ENCODE measurements at regions of chr1 and their contacts with region 1.

Region 1: DNA sequence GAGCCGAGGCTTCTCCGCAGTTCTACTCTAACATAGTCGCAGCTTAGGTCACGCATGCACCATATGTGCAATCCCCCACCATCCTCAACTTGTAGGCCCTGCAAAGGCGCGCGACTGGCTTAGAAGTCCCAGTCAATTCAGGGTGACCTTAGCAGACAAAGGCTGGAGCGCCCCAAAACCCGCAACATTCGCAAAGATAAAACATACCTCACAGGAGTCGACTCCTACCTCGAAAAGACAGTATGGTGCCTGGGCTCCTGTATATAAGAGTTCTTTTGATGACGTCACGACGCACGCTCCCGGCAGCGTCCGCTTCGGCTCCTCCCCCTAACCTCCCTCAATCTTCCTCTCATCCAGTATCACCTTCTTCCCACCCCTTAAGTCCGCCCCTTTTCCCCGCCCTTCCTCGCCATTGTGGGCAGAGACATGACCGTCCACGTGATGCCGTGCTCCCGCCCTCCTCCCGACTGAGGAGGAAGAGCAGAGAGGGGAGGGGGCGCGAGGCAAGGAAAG is at the start of gene GAS5:
- DNase-seq: peak; percentile 99
- H3K4me3 ChIP-seq: peak within 1 kb of the TSS; percentile 36 to 99 (median 90)
- H3K27ac ChIP-seq: peak within 1 kb of the TSS; percentile 64
- H3K4me1 ChIP-seq: peaks cover 48% of the 10 kb centered on the region
- H3K27me3 ChIP-seq: no peaks in the 10 kb centered on the region
- CTCF ChIP-seq: no peak
- POLR2A ChIP-seq: peak; percentile 100
- total RNA-seq, gene GAS5: 302 and 343 TPM in 2 replicates

Region 2: GRCh38 chr1:173476664-173477285 is 391.0 kb before region 1 on chr1:
- CTCF ChIA-PET with region 1: no interaction called
- POLR2A ChIA-PET with region 1: no interaction called
- dilution Hi-C with region 1: no loop called
- intact Hi-C with region 1: loop called (anchors 1 kb)
- DNase-seq: peak; percentile 81
- H3K4me3 ChIP-seq: peak overlapping the region; percentile 63 to 78 (median 70)
- H3K27ac ChIP-seq: peak overlapping the region; percentile 79
- H3K4me1 ChIP-seq: peaks cover 53% of the 10 kb centered on the region
- H3K27me3 ChIP-seq: no peaks in the 10 kb centered on the region
- CTCF ChIP-seq: peak in 1 of 2 donors; percentile 3
- POLR2A ChIP-seq: peak; percentile 78

Region 3: DNA sequence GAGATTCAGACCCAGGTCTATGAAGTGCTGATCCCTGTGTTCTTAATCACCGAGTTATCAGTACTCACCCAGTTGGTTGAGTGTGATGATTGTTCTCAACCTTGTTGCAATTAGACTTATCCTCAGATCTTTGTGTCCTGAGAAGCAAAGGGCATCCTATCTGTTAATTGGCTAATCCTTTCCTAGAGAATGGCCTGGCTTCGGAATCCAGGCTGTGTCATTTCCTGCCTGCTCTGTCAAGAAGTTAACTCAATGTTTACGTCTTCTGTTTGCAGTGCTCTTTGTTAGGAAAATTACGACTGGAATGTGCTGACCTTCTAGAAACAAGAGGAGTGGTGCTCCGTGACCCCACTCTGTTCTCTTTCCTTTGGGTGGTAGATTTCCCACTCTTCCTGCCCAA is 14.7 kb before region 1 on chr1:
- CTCF ChIA-PET with region 1: interaction called, 5 read pairs
- POLR2A ChIA-PET with region 1: interaction called, 6 read pairs
- dilution Hi-C with region 1: no loop called
- intact Hi-C with region 1: loop called (anchors 1 kb)
- DNase-seq: peak; percentile 96
- H3K4me3 ChIP-seq: peak overlapping the region in 1 of 3 experiments; percentile 6
- H3K27ac ChIP-seq: peak overlapping the region; percentile 92
- H3K4me1 ChIP-seq: peaks cover 15% of the 10 kb centered on the region
- H3K27me3 ChIP-seq: no peaks in the 10 kb centered on the region
- CTCF ChIP-seq: no peak
- POLR2A ChIP-seq: peak; percentile 15

Region 4: DNA sequence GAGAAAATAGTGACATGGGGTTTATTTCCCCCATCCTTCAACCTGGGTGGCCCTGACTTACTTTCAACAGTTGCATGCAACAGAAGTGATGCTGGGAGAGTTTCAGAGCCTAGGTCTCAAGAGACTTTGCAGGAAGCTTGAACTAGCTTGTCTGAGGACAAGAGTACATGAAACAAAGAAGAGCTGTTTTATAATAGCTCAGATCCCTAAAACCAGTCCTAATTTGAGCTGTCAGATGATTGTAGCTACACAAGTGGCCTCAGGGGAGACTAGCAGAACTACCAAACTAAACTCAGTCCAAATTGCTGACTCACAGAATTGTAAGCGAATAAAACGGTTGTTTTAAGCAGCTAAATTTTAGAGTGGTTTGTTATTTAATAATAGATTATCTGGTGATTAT is 137.2 kb after region 1 on chr1:
- CTCF ChIA-PET with region 1: no interaction called
- POLR2A ChIA-PET with region 1: no interaction called
- dilution Hi-C with region 1: no loop called
- intact Hi-C with region 1: no loop called
- DNase-seq: no peak
- H3K4me3 ChIP-seq: no peak overlapping the region
- H3K27ac ChIP-seq: no peak overlapping the region
- H3K4me1 ChIP-seq: no peaks in the 10 kb centered on the region
- H3K27me3 ChIP-seq: no peaks in the 10 kb centered on the region
- CTCF ChIP-seq: no peak
- POLR2A ChIP-seq: no peak

Region 5: GRCh38 chr1:174022080-174022975 is 154.5 kb after region 1 on chr1 and contains the start of gene RC3H1:
- CTCF ChIA-PET with region 1: no interaction called
- POLR2A ChIA-PET with region 1: interaction called, 5 read pairs
- dilution Hi-C with region 1: no loop called
- intact Hi-C with region 1: loop called (anchors 1 kb)
- DNase-seq: peak; percentile 91
- H3K4me3 ChIP-seq: peak within 1 kb of the TSS; percentile 82 to 91 (median 87)
- H3K27ac ChIP-seq: peak within 1 kb of the TSS; percentile 88
- H3K4me1 ChIP-seq: peaks cover 22% of the 10 kb centered on the region
- H3K27me3 ChIP-seq: no peaks in the 10 kb centered on the region
- CTCF ChIP-seq: no peak
- POLR2A ChIP-seq: peak; percentile 74
- total RNA-seq, gene RC3H1: 30.0 and 41.4 TPM in 2 replicates

Region 6: DNA sequence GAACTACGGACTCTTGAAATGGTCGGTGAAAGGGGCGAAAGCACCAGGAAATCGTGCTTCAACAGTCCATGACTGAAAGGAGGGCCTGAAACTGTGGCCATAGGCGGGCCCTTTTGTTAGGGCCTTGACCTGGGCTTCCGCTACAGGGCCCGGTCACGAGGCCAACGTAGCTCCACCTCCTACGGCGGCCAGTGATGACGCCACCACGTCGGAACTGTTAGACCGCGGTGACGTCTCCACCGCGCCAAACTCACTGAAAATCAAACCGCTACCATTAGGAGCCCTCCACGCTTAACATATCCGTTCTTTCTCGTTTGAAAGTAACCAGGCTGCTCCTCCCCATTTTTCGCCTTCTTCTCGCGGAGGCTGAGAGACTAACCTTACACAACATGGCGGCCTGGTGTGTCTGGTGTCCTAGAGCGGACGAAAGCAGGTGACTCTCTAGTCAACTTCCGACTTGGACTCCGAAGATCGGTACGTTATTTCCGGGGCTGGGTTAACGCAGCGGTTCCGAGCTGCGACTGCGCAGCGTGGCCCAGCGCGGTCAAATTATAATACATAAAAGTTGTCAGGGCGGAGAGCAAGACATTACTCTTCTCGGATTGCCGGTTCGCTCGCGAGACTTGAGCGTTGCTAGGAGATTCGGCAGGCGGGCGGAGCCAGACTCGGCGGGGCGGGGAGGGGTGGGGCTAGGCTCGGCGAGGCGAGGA is 1131.6 kb after region 1 on chr1:
- CTCF ChIA-PET with region 1: no interaction called
- POLR2A ChIA-PET with region 1: no interaction called
- dilution Hi-C with region 1: no loop called
- intact Hi-C with region 1: loop called (anchors 5 kb)
- DNase-seq: peak; percentile 100
- H3K4me3 ChIP-seq: peak overlapping the region in 2 of 3 experiments; percentile 67 to 95
- H3K27ac ChIP-seq: peak overlapping the region; percentile 90
- H3K4me1 ChIP-seq: peaks cover 38% of the 10 kb centered on the region
- H3K27me3 ChIP-seq: no peaks in the 10 kb centered on the region
- CTCF ChIP-seq: no peak
- POLR2A ChIP-seq: peak; percentile 91